ENCODE measurements at regions of chr4 and their contacts with region 1.

Region 1: GRCh38 chr4:156968479-156968984 is 3.1 kb downstream of the PDGFC start:
- DNase-seq: peak; percentile 15 to 85
- H3K4me3 ChIP-seq: peak overlapping the region; percentile 88 to 93
- H3K27ac ChIP-seq: peak overlapping the region; percentile 98 to 99
- H3K4me1 ChIP-seq: peaks cover 0 to 7% of the 10 kb centered on the region in 2 donors
- H3K27me3 ChIP-seq: no peaks in the 10 kb centered on the region
- CTCF ChIP-seq: peak; percentile 74 to 86 (median 83)

Region 2: DNA sequence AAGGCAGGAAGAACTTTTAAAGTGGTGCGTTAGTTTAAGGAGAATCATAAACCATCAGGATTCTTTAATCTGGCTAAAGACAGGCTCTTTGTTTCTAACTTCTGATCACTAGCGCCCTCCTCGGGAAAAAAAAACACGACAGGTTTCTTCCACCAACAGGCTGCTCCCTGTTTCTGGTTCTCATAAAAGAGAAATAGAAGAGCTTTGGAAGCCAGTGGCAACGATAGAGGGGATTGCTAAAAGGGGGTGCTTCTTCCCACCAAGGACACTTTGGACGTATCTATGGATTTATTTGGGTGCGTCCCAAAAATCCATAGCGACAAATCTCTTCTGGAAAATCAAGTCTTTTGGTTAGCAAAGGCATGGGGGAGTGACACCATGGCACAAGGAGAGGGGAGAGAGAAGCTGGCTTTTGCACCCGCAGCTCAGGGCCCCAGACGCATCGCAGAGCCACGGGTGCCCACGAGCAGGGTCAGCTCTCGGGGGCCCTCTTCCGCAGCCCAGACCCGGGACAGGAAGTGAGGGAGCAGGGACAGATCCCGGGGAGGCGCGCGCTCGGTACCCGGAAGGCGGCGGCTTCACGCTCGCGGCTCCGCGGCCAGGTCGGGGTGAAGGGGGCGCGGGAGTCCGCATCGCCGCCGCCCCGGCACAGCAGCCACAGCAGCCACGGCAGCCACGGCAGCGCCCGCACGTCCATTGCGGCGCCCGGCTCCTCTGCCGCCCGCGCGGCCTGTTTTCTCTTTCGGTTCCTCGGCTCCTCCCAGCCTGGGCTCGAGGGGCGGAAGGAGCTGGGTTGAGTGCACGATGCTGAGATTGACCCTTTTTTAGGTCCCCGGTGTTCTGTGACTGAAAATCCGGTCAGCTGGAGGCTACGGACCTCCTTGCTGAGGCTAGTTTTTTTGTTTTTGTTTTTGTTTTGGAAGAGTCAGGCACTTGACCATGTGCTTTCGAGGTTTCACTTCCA is 1015.1 kb before region 1 on chr4 and contains the start of gene CTSO:
- intact Hi-C with region 1: loop called (anchors 10 kb)
- DNase-seq: peak; percentile 20 to 81
- H3K4me3 ChIP-seq: peak within 1 kb of the TSS; percentile 85 to 98
- H3K27ac ChIP-seq: peak within 1 kb of the TSS; percentile 98
- H3K4me1 ChIP-seq: peaks cover 0 to 4% of the 10 kb centered on the region in 2 donors
- H3K27me3 ChIP-seq: no peaks in the 10 kb centered on the region
- CTCF ChIP-seq: peak; percentile 37 to 80 (median 52)
- total RNA-seq, gene CTSO: 7.5 TPM

Region 3: DNA sequence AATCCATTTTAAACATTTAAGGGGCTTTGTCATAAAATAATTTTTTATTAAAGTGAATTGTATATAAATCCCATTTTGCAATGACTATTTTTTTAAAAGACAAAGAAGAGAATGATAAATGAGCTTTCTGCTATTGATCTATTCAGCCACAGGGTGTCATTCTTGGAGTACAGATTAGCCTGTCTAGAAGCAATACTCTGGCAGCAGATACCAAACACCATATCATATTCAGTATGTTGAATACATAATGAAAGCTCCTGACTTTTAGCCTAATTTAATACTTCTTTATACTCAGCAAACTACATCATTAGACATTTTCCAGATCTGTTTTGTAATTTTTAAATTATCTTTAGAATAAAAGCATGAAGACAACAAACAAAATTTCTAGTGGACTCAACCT is 493.2 kb before region 1 on chr4:
- intact Hi-C with region 1: loop called (anchors 1 kb)
- DNase-seq: no peak
- H3K4me3 ChIP-seq: no peak overlapping the region
- H3K27ac ChIP-seq: peak overlapping the region; percentile 77 to 78
- H3K4me1 ChIP-seq: peaks cover 0 to 9% of the 10 kb centered on the region in 2 donors
- H3K27me3 ChIP-seq: no peaks in the 10 kb centered on the region
- CTCF ChIP-seq: peak; percentile 40 to 58 (median 56)

Region 4: DNA sequence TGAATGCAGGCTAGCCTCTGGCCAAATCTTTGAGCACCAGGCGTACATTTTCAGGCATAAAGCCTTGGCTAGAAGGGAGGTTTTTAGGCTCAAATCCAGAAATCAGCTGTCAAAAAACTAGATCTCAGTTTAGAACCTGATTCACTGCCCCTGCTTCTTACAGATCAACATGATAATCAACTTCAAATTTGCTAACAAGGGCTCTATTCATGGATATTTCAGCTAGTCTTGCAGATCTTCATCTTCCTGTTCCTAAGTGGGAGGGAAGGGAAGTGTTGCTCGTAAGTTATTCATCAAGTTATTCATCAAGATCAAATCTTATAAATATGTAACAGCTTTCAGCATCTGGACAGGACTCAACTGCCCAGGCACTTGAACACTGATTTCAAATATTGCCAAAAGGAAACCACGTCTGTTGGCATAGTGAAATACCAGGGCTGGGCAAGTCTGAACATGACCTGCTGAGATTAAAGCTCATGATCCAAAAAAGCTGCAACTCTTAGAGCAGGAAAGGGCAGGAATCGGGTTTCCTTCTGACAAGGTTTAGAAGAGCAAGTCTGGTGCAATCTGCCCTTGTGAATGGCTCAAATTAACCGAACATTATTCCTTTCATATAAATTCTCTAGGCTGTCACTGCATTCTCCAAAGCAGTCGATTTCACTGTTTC is 197.2 kb before region 1 on chr4:
- intact Hi-C with region 1: loop called (anchors 2 kb)
- DNase-seq: peak in 1 of 2 donors; percentile 73
- H3K4me3 ChIP-seq: peak overlapping the region; percentile 24 to 43
- H3K27ac ChIP-seq: peak overlapping the region; percentile 73 to 80
- H3K4me1 ChIP-seq: peaks cover 6 to 50% of the 10 kb centered on the region in 2 donors
- H3K27me3 ChIP-seq: no peaks in the 10 kb centered on the region
- CTCF ChIP-seq: no peak

Region 5: GRCh38 chr4:156805696-156806095 is 162.8 kb before region 1 on chr4:
- intact Hi-C with region 1: no loop called
- DNase-seq: no peak
- H3K4me3 ChIP-seq: no peak overlapping the region
- H3K27ac ChIP-seq: no peak overlapping the region
- H3K4me1 ChIP-seq: peaks cover 0 to 9% of the 10 kb centered on the region in 2 donors
- H3K27me3 ChIP-seq: no peaks in the 10 kb centered on the region
- CTCF ChIP-seq: no peak

Region 6: DNA sequence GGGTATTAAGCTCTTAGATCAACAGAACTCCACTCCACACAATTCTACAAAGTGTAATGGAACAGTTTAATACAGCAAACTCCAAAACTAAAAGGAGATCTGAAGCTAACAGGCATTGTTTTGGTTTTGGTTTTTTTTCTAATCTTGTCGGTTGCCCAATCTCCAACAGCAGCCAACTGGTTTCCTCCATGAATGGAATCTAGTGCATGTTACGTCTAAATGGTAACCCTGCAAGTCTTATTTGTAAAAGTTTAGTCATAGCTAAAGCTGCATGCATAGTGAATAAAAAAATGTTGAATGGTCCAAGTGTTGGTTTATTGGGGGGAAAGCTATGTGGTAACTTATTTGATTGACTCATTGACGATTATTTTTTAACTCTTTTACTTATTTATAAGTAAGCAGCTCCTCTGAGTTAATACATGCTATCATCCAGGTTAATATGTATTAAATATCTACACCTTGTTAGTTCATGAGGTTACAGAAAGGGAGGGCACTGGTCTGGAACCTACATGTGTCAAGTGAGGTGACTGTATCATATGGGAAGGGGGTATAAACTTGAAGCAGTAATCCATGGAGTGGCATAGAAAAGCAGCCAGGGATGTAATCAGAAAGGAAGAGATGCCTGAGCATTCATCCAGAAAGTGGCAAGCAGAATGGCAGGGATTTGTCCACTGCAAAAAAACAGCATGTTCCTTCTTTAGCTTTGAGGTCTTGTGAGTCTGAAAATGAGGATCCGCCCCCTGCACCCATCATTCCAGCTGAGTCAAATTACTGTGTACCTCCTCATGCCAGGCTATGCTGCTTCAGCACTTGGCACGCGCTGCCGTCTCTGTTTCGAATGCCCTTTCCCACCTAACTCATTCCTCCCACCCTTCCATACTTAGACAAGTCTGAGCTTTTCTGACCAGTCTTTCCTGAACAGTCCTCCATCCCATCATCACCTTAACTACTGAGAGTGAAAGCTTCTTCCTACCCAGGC is 78.6 kb before region 1 on chr4:
- intact Hi-C with region 1: loop called (anchors 5 kb)
- DNase-seq: peak; percentile 40 to 65
- H3K4me3 ChIP-seq: no peak overlapping the region
- H3K27ac ChIP-seq: peak overlapping the region; percentile 46 to 56
- H3K4me1 ChIP-seq: peaks cover 3 to 10% of the 10 kb centered on the region in 2 donors
- H3K27me3 ChIP-seq: no peaks in the 10 kb centered on the region
- CTCF ChIP-seq: no peak

Region 7: DNA sequence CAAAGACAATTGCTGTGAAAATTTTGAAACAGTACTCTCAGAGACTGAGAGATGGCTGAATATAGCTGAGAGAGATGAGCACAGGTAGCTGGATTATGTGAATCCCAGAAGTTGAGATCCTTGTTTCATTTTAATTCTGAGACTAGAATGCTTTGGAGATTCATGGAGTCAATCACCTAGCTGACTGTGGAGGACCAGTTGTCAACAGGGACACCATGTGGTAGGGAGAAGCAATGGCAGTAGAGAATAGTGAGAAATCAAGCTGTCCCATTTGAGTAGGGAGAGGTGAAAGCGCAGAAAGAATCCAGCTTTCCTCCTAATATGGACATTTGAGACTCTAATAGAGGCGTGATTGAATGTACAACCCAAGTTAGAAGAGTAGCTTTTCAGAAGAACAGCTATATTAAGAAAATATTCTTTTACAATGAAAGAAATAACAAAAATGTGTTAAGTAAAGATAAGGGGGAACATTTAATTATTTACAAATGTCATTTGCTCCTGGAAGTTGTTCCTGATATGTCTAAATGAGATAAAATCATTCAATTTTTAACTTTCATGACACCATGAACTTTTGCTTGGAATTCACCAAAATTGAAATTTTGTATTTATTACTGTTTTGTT is 77.1 kb after region 1 on chr4:
- intact Hi-C with region 1: loop called (anchors 1 kb)
- DNase-seq: no peak
- H3K4me3 ChIP-seq: no peak overlapping the region
- H3K27ac ChIP-seq: no peak overlapping the region
- H3K4me1 ChIP-seq: peaks cover 0 to 3% of the 10 kb centered on the region in 2 donors
- H3K27me3 ChIP-seq: no peaks in the 10 kb centered on the region
- CTCF ChIP-seq: peak; percentile 67 to 79 (median 73)

Region 8: GRCh38 chr4:157185363-157185762 is 216.8 kb after region 1 on chr4:
- intact Hi-C with region 1: no loop called
- DNase-seq: no peak
- H3K4me3 ChIP-seq: no peak overlapping the region
- H3K27ac ChIP-seq: no peak overlapping the region
- H3K4me1 ChIP-seq: no peaks in the 10 kb centered on the region
- H3K27me3 ChIP-seq: no peaks in the 10 kb centered on the region
- CTCF ChIP-seq: no peak

Region 9: DNA sequence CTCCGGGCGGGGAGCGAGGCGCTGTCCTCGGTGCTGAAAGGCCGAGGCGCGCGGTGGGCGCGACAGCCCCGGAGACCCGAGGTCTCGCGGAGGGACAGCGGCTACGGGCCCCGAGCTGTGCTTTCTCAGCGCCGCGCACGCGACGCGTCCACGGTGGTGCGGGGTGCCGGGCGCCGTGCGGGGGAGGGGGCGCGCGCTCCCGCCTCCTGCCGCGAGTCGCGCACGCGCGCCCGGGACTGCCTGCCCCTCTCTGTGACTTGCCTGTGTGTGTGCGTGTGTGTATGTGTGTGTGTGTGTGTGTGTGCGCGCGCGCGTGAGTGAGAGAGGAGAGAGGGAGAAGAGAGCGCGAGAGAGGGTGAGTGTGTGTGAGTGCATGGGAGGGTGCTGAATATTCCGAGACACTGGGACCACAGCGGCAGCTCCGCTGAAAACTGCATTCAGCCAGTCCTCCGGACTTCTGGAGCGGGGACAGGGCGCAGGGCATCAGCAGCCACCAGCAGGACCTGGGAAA is 251.9 kb after region 1 on chr4 and contains the start of gene GRIA2:
- intact Hi-C with region 1: loop called (anchors 5 kb)
- DNase-seq: peak in 1 of 2 donors; percentile 83
- H3K4me3 ChIP-seq: peak within 1 kb of the TSS; percentile 71 to 79
- H3K27ac ChIP-seq: peak within 1 kb of the TSS; percentile 93 to 95
- H3K4me1 ChIP-seq: peaks cover 0 to 10% of the 10 kb centered on the region in 2 donors
- H3K27me3 ChIP-seq: no peaks in the 10 kb centered on the region
- CTCF ChIP-seq: no peak
- total RNA-seq, gene GRIA2: 3.0 TPM